Prostate gland (tissue), 2 donors: ENCODE measurements at regions of chr11 and their contacts with region 1.

Region 1: GRCh38 chr11:95764267-95764898 is 25.2 kb downstream of the FAM76B start:
- DNase-seq: no peak
- H3K4me3 ChIP-seq: no peak overlapping the region
- H3K27ac ChIP-seq: no peak overlapping the region
- H3K4me1 ChIP-seq: no peaks in the 10 kb centered on the region
- H3K27me3 ChIP-seq: no peaks in the 10 kb centered on the region
- CTCF ChIP-seq: peak; percentile 32 to 88 (median 82)
- POLR2A ChIP-seq: no peak

Region 2: GRCh38 chr11:94973099-94973968 is 791.0 kb before region 1 on chr11 and contains the starts of genes CWC15 and KDM4D:
- intact Hi-C with region 1: loop called (anchors 10 kb)
- DNase-seq: peak; percentile 94
- H3K4me3 ChIP-seq: peak within 1 kb of the TSS; percentile 69 to 85
- H3K27ac ChIP-seq: peak within 1 kb of the TSS; percentile 73 to 78
- H3K4me1 ChIP-seq: no peaks in the 10 kb centered on the region
- H3K27me3 ChIP-seq: no peaks in the 10 kb centered on the region
- CTCF ChIP-seq: peak in 1 of 4 experiments; percentile 15
- POLR2A ChIP-seq: peak; percentile 38
- total RNA-seq, gene CWC15: 33.6 to 43.8 TPM
- total RNA-seq, gene KDM4D: 2.6 to 9.9 TPM

Region 3: DNA sequence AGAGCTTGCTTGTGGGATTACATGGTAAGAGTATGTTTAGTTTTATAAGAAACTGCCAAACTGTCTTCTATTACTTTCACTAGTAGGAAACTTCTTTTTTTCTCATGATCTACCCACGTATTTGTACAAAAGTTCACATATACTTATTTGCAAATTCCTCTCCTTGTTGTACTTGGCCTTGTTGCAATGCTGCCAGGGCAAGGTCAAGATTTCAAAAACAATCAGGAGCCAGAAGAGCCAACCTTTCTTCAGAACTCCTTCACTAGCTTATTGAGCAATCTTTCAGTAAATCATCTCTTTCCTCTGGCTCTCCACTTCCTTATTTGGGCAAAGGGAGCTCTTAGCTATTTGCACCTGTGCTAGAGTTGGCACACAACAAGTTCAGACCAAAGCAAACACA is 688.0 kb before region 1 on chr11:
- intact Hi-C with region 1: loop called (anchors 10 kb)
- DNase-seq: peak; percentile 54
- H3K4me3 ChIP-seq: no peak overlapping the region
- H3K27ac ChIP-seq: peak overlapping the region; percentile 42 to 70
- H3K4me1 ChIP-seq: peaks cover 12% of the 10 kb centered on the region
- H3K27me3 ChIP-seq: no peaks in the 10 kb centered on the region
- CTCF ChIP-seq: no peak
- POLR2A ChIP-seq: no peak

Region 4: DNA sequence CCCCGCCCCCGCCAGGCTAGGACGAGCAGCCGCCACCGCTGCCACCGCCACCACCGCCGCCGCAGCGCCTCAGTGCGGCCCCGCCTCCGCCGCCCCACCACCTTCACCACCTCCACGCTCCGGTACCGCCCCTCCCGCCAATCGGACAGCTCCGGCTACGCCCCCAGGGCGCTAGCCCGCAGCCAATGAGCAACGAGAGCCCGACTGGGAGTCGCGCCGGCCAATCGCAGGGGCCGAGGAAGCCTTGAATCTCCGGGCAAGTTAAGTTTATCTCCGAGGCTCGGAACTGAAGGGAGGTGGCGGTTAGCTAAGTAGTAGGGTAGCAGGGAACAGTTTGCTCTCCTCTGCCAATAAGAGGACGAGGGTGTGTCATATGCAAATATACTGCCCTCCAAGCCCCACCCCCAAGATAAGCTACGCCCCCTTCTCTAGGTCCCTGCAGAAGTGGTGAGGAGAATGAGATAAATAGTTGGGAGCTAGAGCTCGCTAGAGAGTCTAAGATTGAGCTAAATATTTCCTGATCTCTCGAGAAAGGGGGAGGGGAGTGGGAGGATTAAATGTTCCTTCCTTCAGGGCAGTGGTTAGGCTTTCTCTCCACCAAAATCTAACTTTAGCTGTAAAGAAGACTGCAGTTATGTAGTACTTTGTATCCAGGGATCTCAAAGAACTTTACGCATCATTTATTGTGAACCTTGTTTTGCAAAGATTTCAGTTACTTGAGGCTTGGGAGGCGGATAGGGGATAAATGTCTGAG is 533.1 kb before region 1 on chr11 and contains the start of gene SESN3:
- intact Hi-C with region 1: loop called (anchors 10 kb)
- DNase-seq: peak; percentile 99
- H3K4me3 ChIP-seq: peak within 1 kb of the TSS; percentile 82 to 90
- H3K27ac ChIP-seq: peak within 1 kb of the TSS; percentile 84 to 88
- H3K4me1 ChIP-seq: no peaks in the 10 kb centered on the region
- H3K27me3 ChIP-seq: no peaks in the 10 kb centered on the region
- CTCF ChIP-seq: peak in 2 of 4 experiments; percentile 34 to 41
- POLR2A ChIP-seq: peak; percentile 81
- total RNA-seq, gene SESN3: 21.3 to 33.8 TPM

Region 5: DNA sequence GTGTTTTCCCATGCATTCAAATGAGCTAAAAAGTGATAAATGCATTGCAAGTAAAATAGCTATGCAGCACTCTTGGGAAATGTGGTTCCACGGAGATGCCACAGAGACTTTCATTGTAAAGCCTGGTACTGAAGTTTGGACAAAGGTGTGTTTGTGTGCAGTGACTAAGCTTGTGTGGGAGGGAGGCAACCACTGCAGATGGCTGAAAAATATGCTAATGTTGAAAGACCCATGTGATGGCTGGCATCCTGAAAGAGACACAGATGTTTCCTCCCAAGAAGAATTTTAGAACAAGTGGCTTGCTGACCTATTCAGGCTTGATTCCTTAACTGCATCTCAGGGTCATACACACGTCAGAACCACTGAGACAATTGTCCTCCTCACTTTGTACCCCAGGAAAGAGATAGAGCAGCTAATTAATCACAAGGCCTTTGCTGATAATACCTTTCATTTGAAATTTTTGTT is 48.6 kb before region 1 on chr11:
- intact Hi-C with region 1: loop called (anchors 5 kb)
- DNase-seq: no peak
- H3K4me3 ChIP-seq: no peak overlapping the region
- H3K27ac ChIP-seq: no peak overlapping the region
- H3K4me1 ChIP-seq: no peaks in the 10 kb centered on the region
- H3K27me3 ChIP-seq: no peaks in the 10 kb centered on the region
- CTCF ChIP-seq: no peak
- POLR2A ChIP-seq: no peak

Region 6: GRCh38 chr11:95816037-95816436 is 51.7 kb after region 1 on chr11:
- intact Hi-C with region 1: no loop called
- DNase-seq: no peak
- H3K4me3 ChIP-seq: no peak overlapping the region
- H3K27ac ChIP-seq: no peak overlapping the region
- H3K4me1 ChIP-seq: no peaks in the 10 kb centered on the region
- H3K27me3 ChIP-seq: no peaks in the 10 kb centered on the region
- CTCF ChIP-seq: no peak
- POLR2A ChIP-seq: no peak